CD4-positive, alpha-beta T cell (primary cell): ENCODE measurements at regions of chr14 and their contacts with region 1.

Region 1: DNA sequence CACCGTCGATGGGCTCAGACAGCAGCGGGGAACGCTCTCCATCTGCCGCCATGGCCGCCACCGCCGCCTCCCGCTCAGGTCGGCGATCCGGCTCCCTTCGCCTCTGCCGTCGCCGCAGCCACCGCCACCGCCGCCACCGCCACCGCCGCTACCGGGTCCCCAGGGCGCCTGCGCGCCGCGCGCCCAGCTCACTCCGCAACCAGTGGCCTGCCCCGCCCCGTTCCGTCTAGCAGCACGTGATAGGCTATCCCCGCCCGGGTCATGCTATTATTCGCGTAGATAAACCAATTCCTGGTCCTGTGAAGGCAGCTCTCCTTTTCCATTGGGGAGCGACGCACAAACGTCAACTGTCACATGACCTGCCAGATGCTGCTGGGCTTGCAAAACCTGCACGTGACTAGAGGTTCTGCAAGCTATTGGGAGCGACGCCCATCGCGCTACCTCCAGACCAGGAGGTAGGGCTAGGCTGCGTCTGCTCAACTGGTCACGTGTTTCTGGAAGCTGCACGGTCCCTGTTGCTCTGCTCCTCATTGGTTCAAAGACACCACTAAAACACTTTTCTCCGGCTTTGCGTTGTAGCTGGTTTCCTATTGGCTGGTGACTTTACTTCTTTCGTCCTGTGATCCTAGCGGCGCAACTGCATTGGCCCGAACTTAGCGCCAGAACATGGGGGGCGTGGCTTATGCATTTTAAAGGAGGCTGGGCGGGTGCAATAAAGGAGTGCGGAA is at the start of gene PIP4P1:
- DNase-seq: peak; percentile 94 to 100 (median 97)
- ATAC-seq: peak; percentile 86
- H3K4me3 ChIP-seq: peak within 1 kb of the TSS; percentile 69
- H3K4me3 Mint-ChIP-seq: peak within 1 kb of the TSS; percentile 95
- H3K27ac ChIP-seq: peak within 1 kb of the TSS; percentile 94 to 97
- H3K27ac Mint-ChIP-seq: peak within 1 kb of the TSS; percentile 87
- H3K4me1 ChIP-seq: peaks cover 41% of the 10 kb centered on the region
- H3K4me1 Mint-ChIP-seq: peaks cover 26% of the 10 kb centered on the region
- H3K27me3 ChIP-seq: no peaks in the 10 kb centered on the region
- H3K27me3 Mint-ChIP-seq: no peaks in the 10 kb centered on the region
- CTCF ChIP-seq: no peak
- total RNA-seq, gene PIP4P1: 83.9 to 107 TPM

Region 2: GRCh38 chr14:20343092-20343861 is 118.2 kb before region 1 on chr14 and contains the start of gene PARP2:
- CTCF ChIA-PET with region 1: interaction called, 4 read pairs
- POLR2A ChIA-PET with region 1: interaction called, 33 read pairs
- intact Hi-C with region 1: loop called (anchors 1 to 5 kb)
- DNase-seq: peak; percentile 70 to 97 (median 82)
- ATAC-seq: peak; percentile 81
- H3K4me3 ChIP-seq: peak within 1 kb of the TSS; percentile 83
- H3K4me3 Mint-ChIP-seq: peak within 1 kb of the TSS; percentile 99
- H3K27ac ChIP-seq: peak within 1 kb of the TSS; percentile 92 to 95
- H3K27ac Mint-ChIP-seq: peak within 1 kb of the TSS; percentile 97
- H3K4me1 ChIP-seq: no peaks in the 10 kb centered on the region
- H3K4me1 Mint-ChIP-seq: peaks cover 11% of the 10 kb centered on the region
- H3K27me3 ChIP-seq: no peaks in the 10 kb centered on the region
- H3K27me3 Mint-ChIP-seq: no peaks in the 10 kb centered on the region
- CTCF ChIP-seq: no peak
- total RNA-seq, gene PARP2: 16.3 to 20.4 TPM

Region 3: GRCh38 chr14:20413045-20413799 is 48.2 kb before region 1 on chr14 and contains the start of gene TEP1:
- CTCF ChIA-PET with region 1: interaction called, 7 read pairs
- POLR2A ChIA-PET with region 1: interaction called, 28 read pairs
- intact Hi-C with region 1: loop called in 1 of 2 experiments (anchors 5 kb)
- DNase-seq: peak; percentile 47 to 81 (median 66)
- ATAC-seq: peak; percentile 72
- H3K4me3 ChIP-seq: peak within 1 kb of the TSS; percentile 96
- H3K4me3 Mint-ChIP-seq: peak within 1 kb of the TSS; percentile 98
- H3K27ac ChIP-seq: peak within 1 kb of the TSS; percentile 80 to 90
- H3K27ac Mint-ChIP-seq: peak within 1 kb of the TSS; percentile 80
- H3K4me1 ChIP-seq: peaks cover 19% of the 10 kb centered on the region
- H3K4me1 Mint-ChIP-seq: peaks cover 49% of the 10 kb centered on the region
- H3K27me3 ChIP-seq: no peaks in the 10 kb centered on the region
- H3K27me3 Mint-ChIP-seq: no peaks in the 10 kb centered on the region
- CTCF ChIP-seq: no peak
- total RNA-seq, gene TEP1: 14.3 to 17.4 TPM

Region 4: GRCh38 chr14:20477211-20477876 is 15.9 kb after region 1 on chr14:
- CTCF ChIA-PET with region 1: interaction called, 3 read pairs
- POLR2A ChIA-PET with region 1: interaction called, 43 read pairs
- intact Hi-C with region 1: loop called in 1 of 2 experiments (anchors 1 kb)
- DNase-seq: peak in 10 of 14 experiments; percentile 12 to 79 (median 36)
- ATAC-seq: peak; percentile 82
- H3K4me3 ChIP-seq: peak overlapping the region; percentile 21
- H3K4me3 Mint-ChIP-seq: peak overlapping the region; percentile 68
- H3K27ac ChIP-seq: peak overlapping the region; percentile 53 to 71
- H3K27ac Mint-ChIP-seq: peak overlapping the region; percentile 87
- H3K4me1 ChIP-seq: peaks cover 80% of the 10 kb centered on the region
- H3K4me1 Mint-ChIP-seq: peaks cover 91% of the 10 kb centered on the region
- H3K27me3 ChIP-seq: no peaks in the 10 kb centered on the region
- H3K27me3 Mint-ChIP-seq: no peaks in the 10 kb centered on the region
- CTCF ChIP-seq: no peak

Region 5: GRCh38 chr14:20489093-20489994 is 27.9 kb after region 1 on chr14:
- CTCF ChIA-PET with region 1: no interaction called
- POLR2A ChIA-PET with region 1: interaction called, 14 read pairs
- intact Hi-C with region 1: no loop called
- DNase-seq: peak in 6 of 14 experiments; percentile 10 to 58 (median 14)
- ATAC-seq: peak; percentile 83
- H3K4me3 ChIP-seq: no peak overlapping the region
- H3K4me3 Mint-ChIP-seq: peak overlapping the region; percentile 69
- H3K27ac ChIP-seq: peak overlapping the region in 1 of 2 donors; percentile 19
- H3K27ac Mint-ChIP-seq: peak overlapping the region; percentile 84
- H3K4me1 ChIP-seq: peaks cover 58% of the 10 kb centered on the region
- H3K4me1 Mint-ChIP-seq: peaks cover 83% of the 10 kb centered on the region
- H3K27me3 ChIP-seq: no peaks in the 10 kb centered on the region
- H3K27me3 Mint-ChIP-seq: no peaks in the 10 kb centered on the region
- CTCF ChIP-seq: no peak

Region 6: DNA sequence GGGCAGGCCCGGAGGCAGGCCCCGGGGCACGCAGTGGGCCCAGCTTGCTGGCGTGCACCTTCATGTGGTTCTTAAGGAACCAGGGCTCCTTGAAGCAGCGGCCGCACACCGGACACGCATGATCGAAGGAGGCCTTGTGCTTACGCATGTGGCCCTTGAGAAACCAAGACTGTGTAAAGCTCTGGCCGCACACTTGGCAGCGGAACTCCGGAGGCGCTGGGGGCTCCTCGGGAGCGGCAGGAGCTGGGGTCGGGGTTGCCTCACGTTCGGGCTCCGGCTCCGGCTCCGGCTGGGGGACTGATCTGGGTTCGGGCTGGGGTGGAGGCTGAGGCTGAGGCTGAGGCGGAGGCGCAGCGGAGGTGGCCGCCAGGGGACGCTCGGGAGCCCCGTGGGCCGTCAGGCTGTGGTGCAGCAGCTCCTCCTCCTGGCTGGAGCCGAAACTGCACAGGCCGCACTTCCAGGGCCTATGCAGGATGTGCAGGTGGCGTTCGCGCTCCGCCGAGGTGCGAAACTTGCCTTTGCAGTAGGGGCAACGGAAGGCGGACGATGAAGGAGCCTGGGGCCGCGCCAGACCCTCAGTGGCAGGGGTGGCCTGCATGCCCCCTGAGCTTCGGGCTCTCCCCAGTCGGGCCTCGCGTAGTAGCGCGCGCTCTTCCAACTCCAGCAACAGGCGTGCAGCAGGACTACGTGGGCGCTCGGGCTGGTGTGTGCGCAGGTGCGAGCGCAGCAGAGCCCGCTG is 631.0 kb after region 1 on chr14:
- CTCF ChIA-PET with region 1: no interaction called
- POLR2A ChIA-PET with region 1: interaction called, 3 read pairs
- intact Hi-C with region 1: loop called in 1 of 2 experiments (anchors 10 kb)
- DNase-seq: peak; percentile 84 to 97 (median 93)
- ATAC-seq: peak; percentile 80
- H3K4me3 ChIP-seq: no peak overlapping the region
- H3K4me3 Mint-ChIP-seq: peak overlapping the region; percentile 38
- H3K27ac ChIP-seq: no peak overlapping the region
- H3K27ac Mint-ChIP-seq: peak overlapping the region; percentile 56
- H3K4me1 ChIP-seq: peaks cover 29% of the 10 kb centered on the region
- H3K4me1 Mint-ChIP-seq: peaks cover 39% of the 10 kb centered on the region
- H3K27me3 ChIP-seq: no peaks in the 10 kb centered on the region
- H3K27me3 Mint-ChIP-seq: no peaks in the 10 kb centered on the region
- CTCF ChIP-seq: peak; percentile 100